ENCODE measurements at regions of chr7 and their contacts with region 1.

Region 1: GRCh38 chr7:105268511-105269392 is 120.0 kb downstream of the SRPK2 start:
- DNase-seq: peak in 1 of 2 donors; percentile 58
- ATAC-seq: peak; percentile 66 to 76 (median 72)
- H3K4me3 ChIP-seq: peak overlapping the region; percentile 52
- H3K4me3 Mint-ChIP-seq: peak overlapping the region; percentile 97
- H3K27ac ChIP-seq: peak overlapping the region; percentile 59
- H3K27ac Mint-ChIP-seq: peak overlapping the region; percentile 92 to 94
- H3K4me1 ChIP-seq: peaks cover 5% of the 10 kb centered on the region
- H3K4me1 Mint-ChIP-seq: peaks cover 77 to 89% of the 10 kb centered on the region in 2 donors
- H3K27me3 ChIP-seq: no peaks in the 10 kb centered on the region
- H3K27me3 Mint-ChIP-seq: no peaks in the 10 kb centered on the region
- CTCF ChIP-seq: no peak

Region 2: GRCh38 chr7:104883718-104884452 is 384.9 kb before region 1 on chr7:
- intact Hi-C with region 1: no loop called
- DNase-seq: peak; percentile 72 to 86
- ATAC-seq: peak; percentile 80 to 95 (median 94)
- H3K4me3 ChIP-seq: no peak overlapping the region
- H3K4me3 Mint-ChIP-seq: no peak overlapping the region
- H3K27ac ChIP-seq: no peak overlapping the region
- H3K27ac Mint-ChIP-seq: no peak overlapping the region
- H3K4me1 ChIP-seq: peaks cover 4% of the 10 kb centered on the region
- H3K4me1 Mint-ChIP-seq: peaks cover 7 to 9% of the 10 kb centered on the region in 2 donors
- H3K27me3 ChIP-seq: no peaks in the 10 kb centered on the region
- H3K27me3 Mint-ChIP-seq: peaks cover 8 to 11% of the 10 kb centered on the region in 2 donors
- CTCF ChIP-seq: peak; percentile 91

Region 3: DNA sequence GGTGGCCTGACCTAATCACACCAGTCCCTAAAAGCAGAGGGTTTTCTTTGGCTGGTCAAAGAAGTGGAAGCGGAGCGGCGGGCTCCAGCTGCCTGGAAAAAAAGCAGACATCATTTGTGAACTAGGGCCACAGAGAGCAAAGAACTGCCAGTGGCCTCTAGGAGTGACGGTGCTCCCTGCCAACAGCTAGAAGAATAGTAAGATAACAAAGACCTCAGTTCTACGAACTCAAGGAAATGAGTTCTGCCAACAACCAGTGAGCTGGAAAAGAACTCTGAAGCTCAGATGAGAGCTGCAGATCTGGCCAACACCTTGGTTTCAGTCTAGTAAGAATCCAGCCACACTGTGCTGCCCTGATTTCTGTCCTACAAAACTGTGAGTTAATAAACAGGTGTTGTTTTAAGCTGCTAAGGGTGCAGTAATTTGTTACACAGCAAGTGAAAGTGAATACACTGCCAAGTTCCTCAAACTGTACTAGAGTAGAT is 58.0 kb before region 1 on chr7:
- intact Hi-C with region 1: loop called (anchors 10 kb)
- DNase-seq: peak in 1 of 2 donors; percentile 20
- ATAC-seq: peak; percentile 68 to 79 (median 76)
- H3K4me3 ChIP-seq: no peak overlapping the region
- H3K4me3 Mint-ChIP-seq: peak overlapping the region; percentile 39
- H3K27ac ChIP-seq: peak overlapping the region; percentile 7
- H3K27ac Mint-ChIP-seq: peak overlapping the region; percentile 55 to 66
- H3K4me1 ChIP-seq: peaks cover 20% of the 10 kb centered on the region
- H3K4me1 Mint-ChIP-seq: peaks cover 92 to 93% of the 10 kb centered on the region in 2 donors
- H3K27me3 ChIP-seq: no peaks in the 10 kb centered on the region
- H3K27me3 Mint-ChIP-seq: no peaks in the 10 kb centered on the region
- CTCF ChIP-seq: no peak

Region 4: GRCh38 chr7:105309235-105310169 is 40.8 kb after region 1 on chr7:
- intact Hi-C with region 1: loop called (anchors 5 kb)
- DNase-seq: peak in 1 of 2 donors; percentile 22
- ATAC-seq: peak; percentile 42 to 53 (median 49)
- H3K4me3 ChIP-seq: no peak overlapping the region
- H3K4me3 Mint-ChIP-seq: peak overlapping the region; percentile 40
- H3K27ac ChIP-seq: no peak overlapping the region
- H3K27ac Mint-ChIP-seq: peak overlapping the region; percentile 35 to 70
- H3K4me1 ChIP-seq: peaks cover 16% of the 10 kb centered on the region
- H3K4me1 Mint-ChIP-seq: peaks cover 58 to 65% of the 10 kb centered on the region in 2 donors
- H3K27me3 ChIP-seq: no peaks in the 10 kb centered on the region
- H3K27me3 Mint-ChIP-seq: no peaks in the 10 kb centered on the region
- CTCF ChIP-seq: no peak

Region 5: DNA sequence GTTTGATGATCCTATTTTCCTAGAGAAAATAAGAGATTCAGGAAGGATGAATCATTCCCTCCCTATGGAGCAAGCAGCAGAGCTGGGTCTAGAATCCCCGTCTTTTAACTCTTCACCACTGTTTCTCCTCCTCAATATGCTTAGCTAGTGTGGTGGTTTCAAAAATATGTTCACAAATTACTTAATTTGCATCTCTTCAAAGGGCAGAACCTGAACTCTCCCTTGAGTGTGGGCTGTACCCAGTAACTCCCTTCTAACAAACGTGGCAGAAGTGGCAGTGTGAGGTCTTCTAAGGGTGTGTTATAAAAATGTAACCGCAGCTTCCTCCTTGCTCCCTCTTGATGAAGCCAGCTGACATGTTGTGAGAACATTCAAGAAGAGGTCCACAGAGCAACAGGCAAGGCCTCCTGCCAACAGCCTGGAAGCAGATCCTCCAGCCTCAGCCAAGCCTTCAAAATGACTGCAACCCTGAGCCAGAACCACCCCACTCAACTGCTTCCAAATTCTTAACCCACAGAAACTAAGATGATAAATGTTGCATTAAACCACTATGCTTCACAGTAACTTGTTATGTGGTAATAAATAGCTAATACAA is 83.4 kb after region 1 on chr7:
- intact Hi-C with region 1: loop called (anchors 5 kb)
- DNase-seq: peak; percentile 56 to 88
- ATAC-seq: peak; percentile 89 to 97 (median 97)
- H3K4me3 ChIP-seq: peak overlapping the region; percentile 14
- H3K4me3 Mint-ChIP-seq: peak overlapping the region; percentile 80
- H3K27ac ChIP-seq: peak overlapping the region; percentile 75
- H3K27ac Mint-ChIP-seq: peak overlapping the region; percentile 82 to 88
- H3K4me1 ChIP-seq: peaks cover 84% of the 10 kb centered on the region
- H3K4me1 Mint-ChIP-seq: peaks cover 54 to 69% of the 10 kb centered on the region in 2 donors
- H3K27me3 ChIP-seq: no peaks in the 10 kb centered on the region
- H3K27me3 Mint-ChIP-seq: no peaks in the 10 kb centered on the region
- CTCF ChIP-seq: no peak

Measured in natural killer cell (primary cell).